Endothelial cell of umbilical vein (primary cell): ENCODE measurements at regions of chr1 and their contacts with region 1.

Region 1: DNA sequence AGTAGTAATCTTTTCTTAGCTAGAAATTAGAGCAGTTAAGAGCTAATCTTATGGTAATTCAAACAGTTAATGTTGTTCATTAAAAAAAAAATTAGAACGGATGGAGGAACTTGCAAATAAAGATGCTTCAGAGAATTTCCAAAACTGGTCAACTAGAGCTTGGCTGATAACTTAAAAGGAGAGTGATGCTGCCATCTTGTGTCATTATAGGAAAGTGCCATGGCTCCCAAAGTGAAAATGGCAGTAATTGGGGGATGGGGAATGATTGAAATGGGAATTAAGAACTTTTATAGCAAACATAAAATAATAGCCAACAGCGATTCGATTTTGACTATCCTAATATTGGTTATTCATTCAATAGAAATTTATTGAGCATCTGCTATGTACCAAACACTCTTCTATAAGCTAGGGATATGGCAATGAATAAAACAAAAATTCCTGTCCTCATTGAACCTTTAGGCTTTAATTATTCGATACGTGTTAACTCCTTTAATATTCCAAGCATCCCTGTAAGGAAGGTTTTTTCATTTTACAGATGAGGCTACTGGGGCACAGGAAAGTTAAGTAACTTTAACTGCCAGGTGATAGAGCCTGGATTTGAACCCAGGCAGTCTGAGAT is 5.7 kb upstream of the PLPP3 start:
- DNase-seq: peak; percentile 67
- H3K4me3 ChIP-seq: no peak overlapping the region
- H3K27ac ChIP-seq: no peak overlapping the region
- H3K4me1 ChIP-seq: peaks cover 2% of the 10 kb centered on the region
- H3K27me3 ChIP-seq: no peaks in the 10 kb centered on the region
- CTCF ChIP-seq: peak; percentile 61 to 65
- POLR2A ChIP-seq: no peak

Region 2: DNA sequence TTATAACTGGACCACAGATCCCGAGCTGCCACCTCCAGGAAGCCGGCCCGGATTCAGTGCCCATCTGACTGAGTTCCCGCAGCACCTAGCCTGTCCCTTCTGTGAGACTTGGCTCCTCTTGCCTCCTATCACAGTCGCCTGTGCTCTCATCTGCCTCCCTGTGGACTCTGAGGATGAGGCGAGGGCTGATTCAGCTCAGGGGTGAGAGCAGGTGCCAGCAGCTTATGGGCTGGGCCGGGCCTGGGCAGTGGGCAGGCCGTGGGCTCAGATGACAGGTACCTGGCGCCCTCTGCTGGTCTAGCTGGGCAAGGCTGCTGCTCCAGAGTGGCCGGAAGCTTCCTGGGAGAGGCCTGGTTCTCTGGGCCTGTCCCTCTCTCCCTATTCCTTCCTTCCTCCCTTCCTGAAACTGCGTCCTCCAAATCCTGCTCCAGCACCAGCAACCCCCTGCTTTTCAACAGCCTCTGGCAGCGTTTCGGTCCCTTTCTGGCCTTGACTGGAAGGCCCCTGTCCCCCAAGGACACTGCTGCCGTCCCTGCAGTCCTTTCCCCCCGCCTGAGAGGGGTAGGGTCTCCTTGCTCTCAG is 1563.0 kb before region 1 on chr1:
- CTCF ChIA-PET with region 1: no interaction called
- POLR2A ChIA-PET with region 1: no interaction called
- dilution Hi-C with region 1: no loop called
- intact Hi-C with region 1: loop called (anchors 10 kb)
- DNase-seq: peak; percentile 72
- H3K4me3 ChIP-seq: no peak overlapping the region
- H3K27ac ChIP-seq: no peak overlapping the region
- H3K4me1 ChIP-seq: no peaks in the 10 kb centered on the region
- H3K27me3 ChIP-seq: peaks cover 0 to 2% of the 10 kb centered on the region in 2 experiments
- CTCF ChIP-seq: peak; percentile 94 to 98
- POLR2A ChIP-seq: no peak

Region 3: DNA sequence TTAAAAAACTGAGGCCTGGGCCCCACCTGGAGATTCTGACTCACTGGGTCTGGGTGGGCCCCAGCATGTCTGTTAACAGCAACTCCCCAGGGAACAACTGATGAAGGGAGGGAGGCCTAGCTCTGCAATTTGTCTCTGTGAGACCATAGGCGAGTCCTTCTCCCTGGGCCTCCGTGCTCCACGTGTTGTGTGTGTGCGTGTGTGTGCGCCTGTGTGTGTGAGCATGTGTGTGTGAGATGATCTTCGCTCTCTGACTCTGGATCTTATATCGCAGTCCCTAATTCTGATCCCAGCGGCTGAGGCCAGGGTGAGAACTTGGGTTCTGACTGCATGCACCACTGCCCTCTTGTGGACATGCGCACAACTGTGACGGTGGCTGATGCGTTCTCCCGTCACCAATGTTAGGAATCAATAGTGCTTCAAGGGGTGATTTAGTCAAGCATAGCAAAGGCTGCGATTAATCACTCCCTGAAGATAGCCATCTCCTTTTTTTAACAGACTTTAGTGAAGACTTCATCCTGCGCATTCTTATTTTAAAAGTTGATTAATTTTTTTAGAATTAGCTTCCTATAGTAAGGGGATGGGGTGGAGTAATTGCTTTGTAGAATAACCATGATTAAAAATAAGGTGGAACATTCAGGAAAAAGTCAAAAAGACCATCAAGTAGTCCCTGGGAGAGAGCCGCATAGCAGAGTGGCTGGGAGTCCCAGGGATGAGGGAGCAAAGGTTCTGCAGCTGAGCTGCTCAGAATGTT is 1307.5 kb before region 1 on chr1:
- CTCF ChIA-PET with region 1: interaction called, 99 read pairs
- POLR2A ChIA-PET with region 1: no interaction called
- dilution Hi-C with region 1: no loop called
- intact Hi-C with region 1: no loop called
- DNase-seq: peak; percentile 66
- H3K4me3 ChIP-seq: no peak overlapping the region
- H3K27ac ChIP-seq: no peak overlapping the region
- H3K4me1 ChIP-seq: peaks cover 15% of the 10 kb centered on the region
- H3K27me3 ChIP-seq: no peaks in the 10 kb centered on the region
- CTCF ChIP-seq: peak; percentile 82 to 83
- POLR2A ChIP-seq: no peak

Region 4: GRCh38 chr1:55478742-55479141 is 1106.3 kb before region 1 on chr1:
- CTCF ChIA-PET with region 1: interaction called, 105 read pairs
- POLR2A ChIA-PET with region 1: no interaction called
- dilution Hi-C with region 1: no loop called
- intact Hi-C with region 1: loop called (anchors 1 kb)
- DNase-seq: peak; percentile 68
- H3K4me3 ChIP-seq: no peak overlapping the region
- H3K27ac ChIP-seq: no peak overlapping the region
- H3K4me1 ChIP-seq: peaks cover 19% of the 10 kb centered on the region
- H3K27me3 ChIP-seq: no peaks in the 10 kb centered on the region
- CTCF ChIP-seq: peak in 1 of 2 donors; percentile 19
- POLR2A ChIP-seq: no peak

Region 5: DNA sequence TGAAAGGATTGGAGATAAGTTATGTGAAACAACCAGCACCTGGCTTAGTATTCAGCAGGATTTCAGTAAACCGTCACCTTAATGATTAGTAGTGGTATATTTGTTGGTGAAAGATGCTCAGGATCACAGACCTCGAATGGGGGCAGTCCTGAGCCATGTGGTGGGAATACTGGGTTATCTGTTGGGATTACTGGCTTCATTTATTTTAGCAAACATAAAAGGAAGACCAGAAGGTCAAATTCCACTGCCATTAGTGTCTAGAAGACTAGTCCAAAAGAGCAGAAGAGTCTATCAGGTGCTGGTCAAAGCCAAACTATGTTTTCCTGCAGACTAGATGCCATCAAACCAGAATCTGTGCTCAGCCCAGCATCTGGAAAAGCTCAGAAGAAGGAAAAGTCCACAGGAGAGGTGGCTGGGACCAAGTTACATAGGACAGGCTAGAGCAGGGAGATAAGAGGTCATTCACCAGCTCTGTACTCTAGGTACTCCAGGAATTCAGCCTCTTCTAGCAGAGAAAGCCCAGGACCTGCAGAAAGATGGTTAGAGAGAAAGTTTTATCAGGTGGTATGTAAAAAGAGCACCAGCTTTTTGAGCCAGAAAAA is 349.0 kb before region 1 on chr1:
- CTCF ChIA-PET with region 1: no interaction called
- POLR2A ChIA-PET with region 1: no interaction called
- dilution Hi-C with region 1: no loop called
- intact Hi-C with region 1: no loop called
- DNase-seq: no peak
- H3K4me3 ChIP-seq: no peak overlapping the region
- H3K27ac ChIP-seq: no peak overlapping the region
- H3K4me1 ChIP-seq: no peaks in the 10 kb centered on the region
- H3K27me3 ChIP-seq: no peaks in the 10 kb centered on the region
- CTCF ChIP-seq: no peak
- POLR2A ChIP-seq: no peak

Region 6: GRCh38 chr1:56709269-56709880 is 124.4 kb after region 1 on chr1:
- CTCF ChIA-PET with region 1: interaction called, 31 read pairs
- POLR2A ChIA-PET with region 1: no interaction called
- dilution Hi-C with region 1: no loop called
- intact Hi-C with region 1: loop called (anchors 1 kb)
- DNase-seq: peak; percentile 69
- H3K4me3 ChIP-seq: no peak overlapping the region
- H3K27ac ChIP-seq: no peak overlapping the region
- H3K4me1 ChIP-seq: peaks cover 2% of the 10 kb centered on the region
- H3K27me3 ChIP-seq: no peaks in the 10 kb centered on the region
- CTCF ChIP-seq: peak; percentile 32 to 42
- POLR2A ChIP-seq: no peak